Activated naive CD4-positive, alpha-beta T cell treated with anti-CD3 and anti-CD28 coated beads for 36 hours (primary cell): ENCODE measurements at regions of chr2 and their contacts with region 1.

Region 1: DNA sequence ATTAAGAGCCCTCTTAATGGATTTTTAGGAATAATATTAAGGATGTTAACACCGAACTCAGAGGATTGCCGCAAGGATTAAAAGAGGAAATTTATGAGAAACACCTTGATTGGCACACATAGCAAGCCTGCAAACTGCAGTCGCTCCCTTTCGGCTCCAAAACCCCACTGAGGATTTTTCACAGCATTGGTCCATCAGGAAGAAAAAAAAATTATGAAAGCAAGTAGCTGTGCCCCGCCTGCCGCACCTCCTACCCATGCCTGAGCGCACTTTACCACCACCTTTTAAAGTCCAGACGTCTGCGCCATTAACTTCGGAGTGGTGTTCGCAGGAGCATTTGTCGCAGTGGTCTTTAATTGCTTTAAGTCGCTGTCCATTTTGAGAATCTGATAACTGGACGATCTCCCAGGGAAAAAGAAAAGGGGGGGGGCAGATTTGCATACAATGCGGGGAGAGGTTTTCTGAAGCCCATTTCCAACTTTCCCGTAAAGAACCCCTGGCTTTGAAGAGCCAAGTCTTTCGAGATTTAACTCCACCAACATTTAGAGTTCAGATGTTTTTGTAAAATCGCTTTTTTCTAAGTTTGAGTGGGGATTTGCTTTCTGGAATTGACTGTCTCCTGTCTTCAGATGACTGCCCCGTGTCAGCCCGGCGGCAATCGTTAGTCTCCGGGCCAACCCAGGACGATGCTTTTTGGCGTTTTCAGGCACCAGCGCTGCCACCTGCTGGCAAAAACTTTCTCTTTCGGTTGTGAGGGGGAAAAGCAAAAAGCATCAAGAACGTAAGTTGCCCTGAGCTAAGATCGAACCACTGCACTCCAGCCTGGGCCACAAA is 914 bp upstream of the TRABD2A start:
- DNase-seq: peak; percentile 97
- H3K4me3 Mint-ChIP-seq: peak overlapping the region; percentile 87
- H3K27ac Mint-ChIP-seq: peak overlapping the region; percentile 97
- H3K4me1 Mint-ChIP-seq: peaks cover 51% of the 10 kb centered on the region
- H3K27me3 Mint-ChIP-seq: no peaks in the 10 kb centered on the region

Region 2: GRCh38 chr2:84526562-84526961 is 355.2 kb before region 1 on chr2:
- CTCF ChIA-PET with region 1: interaction called, 3 read pairs
- intact Hi-C with region 1: loop called (anchors 1 kb)
- DNase-seq: no peak
- H3K4me3 Mint-ChIP-seq: no peak overlapping the region
- H3K27ac Mint-ChIP-seq: peak overlapping the region; percentile 50
- H3K4me1 Mint-ChIP-seq: peaks cover 17% of the 10 kb centered on the region
- H3K27me3 Mint-ChIP-seq: no peaks in the 10 kb centered on the region

Region 3: GRCh38 chr2:84741296-84741765 is 140.5 kb before region 1 on chr2:
- CTCF ChIA-PET with region 1: interaction called, 8 read pairs
- intact Hi-C with region 1: loop called (anchors 1 kb)
- DNase-seq: peak; percentile 79
- H3K4me3 Mint-ChIP-seq: no peak overlapping the region
- H3K27ac Mint-ChIP-seq: no peak overlapping the region
- H3K4me1 Mint-ChIP-seq: peaks cover 24% of the 10 kb centered on the region
- H3K27me3 Mint-ChIP-seq: no peaks in the 10 kb centered on the region

Region 4: DNA sequence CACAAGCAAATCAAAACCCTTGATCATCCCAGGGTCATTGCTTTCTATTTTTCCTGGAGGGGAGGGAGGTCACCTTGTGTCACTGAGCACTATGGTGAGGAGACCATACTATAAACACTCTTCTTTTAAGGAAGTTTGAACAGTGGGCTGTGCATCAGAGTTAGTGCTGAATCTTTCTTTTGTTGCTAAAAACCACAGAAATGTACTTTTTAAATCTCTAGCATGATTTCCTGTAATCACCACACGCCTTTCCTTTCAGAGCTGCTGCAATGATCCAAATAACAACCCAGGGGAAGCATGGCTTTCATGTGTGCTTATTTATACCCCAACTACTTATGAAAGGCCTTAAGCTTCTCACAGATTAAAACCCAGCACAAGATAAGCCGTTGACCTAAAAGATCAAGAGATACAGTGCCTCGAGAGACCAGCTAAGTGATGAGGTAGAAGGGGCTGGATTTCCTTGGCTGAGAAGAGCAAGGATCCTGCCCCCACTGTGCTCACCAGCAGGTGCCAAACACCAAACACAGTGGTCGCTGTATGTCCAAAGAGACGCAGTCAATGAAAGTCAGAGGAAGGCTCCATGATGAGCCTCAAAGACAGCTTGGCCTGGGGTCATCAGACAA is 35.6 kb before region 1 on chr2:
- CTCF ChIA-PET with region 1: interaction called, 13 read pairs
- intact Hi-C with region 1: loop called (anchors 1 kb)
- DNase-seq: peak; percentile 66
- H3K4me3 Mint-ChIP-seq: peak overlapping the region; percentile 78
- H3K27ac Mint-ChIP-seq: peak overlapping the region; percentile 99
- H3K4me1 Mint-ChIP-seq: peaks cover 95% of the 10 kb centered on the region
- H3K27me3 Mint-ChIP-seq: no peaks in the 10 kb centered on the region

Region 5: GRCh38 chr2:84870306-84870705 is 11.5 kb before region 1 on chr2:
- CTCF ChIA-PET with region 1: interaction called, 11 read pairs
- intact Hi-C with region 1: loop called (anchors 1 kb)
- DNase-seq: no peak
- H3K4me3 Mint-ChIP-seq: no peak overlapping the region
- H3K27ac Mint-ChIP-seq: peak overlapping the region; percentile 6
- H3K4me1 Mint-ChIP-seq: peaks cover 89% of the 10 kb centered on the region
- H3K27me3 Mint-ChIP-seq: no peaks in the 10 kb centered on the region

Region 6: DNA sequence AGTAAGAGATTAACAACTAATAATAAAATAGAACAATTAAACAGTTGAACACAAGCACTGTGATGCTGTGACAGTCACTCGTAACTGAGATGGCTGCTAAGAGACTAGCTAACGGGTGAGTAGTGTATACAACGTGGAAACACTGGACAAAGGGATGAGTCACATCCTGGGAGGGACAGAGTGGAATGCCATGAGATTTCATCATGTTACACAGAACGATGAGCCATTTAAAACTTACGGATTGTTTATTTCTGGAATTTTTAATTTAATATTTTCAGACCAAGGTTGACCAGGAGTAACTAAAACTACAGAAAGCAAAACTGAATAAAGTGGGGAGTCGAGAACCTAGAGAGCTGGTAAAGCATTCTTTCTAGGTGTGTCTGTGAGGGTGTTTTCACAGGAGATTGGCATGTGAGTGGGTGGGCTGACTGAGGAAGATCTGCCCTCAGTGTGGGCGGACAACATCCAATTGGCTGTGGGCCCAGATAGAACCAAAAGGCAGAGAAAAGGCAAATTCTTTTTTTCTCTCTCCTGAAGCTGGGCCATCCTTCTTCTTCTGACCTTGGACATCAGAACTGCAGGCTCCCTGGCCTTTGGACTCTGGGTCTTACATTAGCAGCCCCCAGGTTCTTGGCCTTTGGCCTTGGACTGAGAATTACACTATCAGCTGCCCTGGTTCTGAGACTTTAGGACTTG is 38.2 kb after region 1 on chr2:
- CTCF ChIA-PET with region 1: interaction called, 75 read pairs
- intact Hi-C with region 1: loop called (anchors 1 kb)
- DNase-seq: peak; percentile 75
- H3K4me3 Mint-ChIP-seq: peak overlapping the region; percentile 61
- H3K27ac Mint-ChIP-seq: peak overlapping the region; percentile 90
- H3K4me1 Mint-ChIP-seq: peaks cover 59% of the 10 kb centered on the region
- H3K27me3 Mint-ChIP-seq: no peaks in the 10 kb centered on the region

Region 7: GRCh38 chr2:84947010-84947593 is 65.3 kb after region 1 on chr2:
- CTCF ChIA-PET with region 1: no interaction called
- intact Hi-C with region 1: no loop called
- DNase-seq: no peak
- H3K4me3 Mint-ChIP-seq: peak overlapping the region; percentile 11
- H3K27ac Mint-ChIP-seq: peak overlapping the region; percentile 92
- H3K4me1 Mint-ChIP-seq: peaks cover 46% of the 10 kb centered on the region
- H3K27me3 Mint-ChIP-seq: no peaks in the 10 kb centered on the region